Mammary epithelial cell (primary cell): ENCODE measurements at regions of chr2 and their contacts with region 1.

Region 1: GRCh38 chr2:109489969-109490368 is 123.8 kb downstream of the SEPTIN10 start:
- DNase-seq: no peak
- H3K4me3 ChIP-seq: no peak overlapping the region
- H3K27ac ChIP-seq: no peak overlapping the region
- H3K4me1 ChIP-seq: no peaks in the 10 kb centered on the region
- H3K27me3 ChIP-seq: no peaks in the 10 kb centered on the region
- CTCF ChIP-seq: peak in 1 of 2 donors; percentile 34

Region 2: GRCh38 chr2:109312892-109313291 is 177.1 kb before region 1 on chr2:
- CTCF ChIA-PET with region 1: no interaction called
- dilution Hi-C with region 1: no loop called
- in situ Hi-C with region 1: no loop called
- intact Hi-C with region 1: loop called (anchors 2 kb)
- DNase-seq: no peak
- H3K4me3 ChIP-seq: no peak overlapping the region
- H3K27ac ChIP-seq: no peak overlapping the region
- H3K4me1 ChIP-seq: no peaks in the 10 kb centered on the region
- H3K27me3 ChIP-seq: peaks cover 5% of the 10 kb centered on the region
- CTCF ChIP-seq: peak; percentile 20 to 52

Region 3: DNA sequence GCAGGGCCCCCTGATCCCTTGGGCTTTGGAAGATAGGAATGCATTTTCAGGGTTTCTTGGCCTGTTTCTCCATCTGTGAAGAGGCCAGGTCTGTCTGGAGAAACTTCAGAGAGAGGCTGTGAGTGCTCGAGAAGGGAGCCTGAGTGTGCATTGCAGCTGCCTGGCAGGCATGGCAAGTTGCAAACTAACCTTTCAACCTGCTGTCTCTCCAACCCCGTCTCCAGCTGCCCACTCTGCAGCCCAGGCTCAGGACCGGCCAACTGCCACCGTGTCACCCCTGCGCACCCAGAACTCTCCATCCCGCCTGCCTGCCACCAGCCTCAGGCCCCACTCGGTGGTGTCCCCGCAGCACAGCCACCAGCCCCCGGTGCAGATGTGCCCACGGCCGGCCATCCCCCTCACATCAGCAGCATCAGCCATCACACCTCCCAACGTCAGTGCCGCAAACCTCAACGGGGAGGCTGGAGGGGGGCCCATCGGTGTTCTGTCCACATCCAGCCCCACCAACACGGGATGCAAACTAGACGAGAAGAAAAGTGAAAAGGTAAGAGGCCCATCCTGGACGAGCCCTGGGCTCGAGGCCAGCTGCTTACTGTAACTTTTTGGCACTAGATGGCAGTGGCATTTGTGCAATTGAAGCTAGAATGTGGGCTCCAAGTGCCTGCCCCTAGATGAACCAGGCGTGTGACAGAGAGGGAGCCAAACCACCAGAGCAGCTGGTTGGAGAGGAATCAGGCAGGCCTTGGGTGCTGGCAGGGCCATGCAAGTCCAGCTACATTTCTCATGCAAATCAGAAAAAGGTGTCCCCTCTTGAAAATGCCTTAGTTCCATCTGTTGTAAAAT is 40.8 kb before region 1 on chr2:
- CTCF ChIA-PET with region 1: no interaction called
- dilution Hi-C with region 1: no loop called
- in situ Hi-C with region 1: no loop called
- intact Hi-C with region 1: loop called (anchors 2 kb)
- DNase-seq: peak; percentile 36
- H3K4me3 ChIP-seq: no peak overlapping the region
- H3K27ac ChIP-seq: no peak overlapping the region
- H3K4me1 ChIP-seq: no peaks in the 10 kb centered on the region
- H3K27me3 ChIP-seq: no peaks in the 10 kb centered on the region
- CTCF ChIP-seq: peak in 1 of 2 donors; percentile 39